Heart left ventricle (tissue), 16 donors: ENCODE measurements at regions of chr5 and their contacts with region 1.

Region 1: DNA sequence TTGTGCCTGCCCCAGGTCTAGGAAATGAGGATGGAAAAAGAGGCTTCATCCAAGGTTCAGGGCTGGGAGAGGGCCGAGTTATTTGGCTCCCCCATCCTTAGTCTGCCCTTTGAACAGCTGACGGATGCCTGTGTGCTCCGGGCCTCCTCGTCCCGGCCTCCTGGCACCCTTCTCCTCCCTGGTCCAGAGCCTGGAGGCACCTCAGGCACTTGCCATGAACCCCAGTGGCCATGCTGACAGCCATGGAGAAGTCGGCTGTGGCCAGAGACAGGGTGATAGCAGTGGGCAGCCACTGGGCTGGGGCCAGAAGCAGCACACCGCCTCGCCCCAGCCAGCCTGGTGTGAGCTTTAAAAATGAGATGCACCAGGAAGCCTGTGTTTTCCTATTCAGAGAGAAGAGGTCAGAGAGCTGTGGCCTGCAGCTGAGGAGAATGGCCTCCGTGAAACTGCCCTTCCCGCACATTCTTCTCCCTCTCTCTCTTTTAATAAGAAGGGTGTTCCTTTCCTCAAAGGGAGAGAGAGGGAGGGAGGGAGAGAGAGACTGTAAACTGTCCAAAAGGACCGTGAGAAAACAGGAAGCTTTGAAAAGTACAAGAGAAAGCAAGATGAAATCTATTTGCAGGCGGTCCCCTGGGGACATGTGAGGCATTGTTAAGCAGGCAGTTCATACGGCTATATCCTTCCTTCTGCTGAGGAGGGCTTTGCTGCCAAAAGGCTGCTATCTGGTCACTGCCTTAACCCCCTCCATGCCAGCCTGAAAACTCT is 55.3 kb downstream of the ZNF366 start:
- DNase-seq: peak; percentile 67 to 90 (median 87)
- ATAC-seq: peak; percentile 72 to 86 (median 84)
- H3K4me3 ChIP-seq: peak overlapping the region in 1 of 12 donors; percentile 1
- H3K27ac ChIP-seq: peak overlapping the region; percentile 82 to 99 (median 92)
- H3K4me1 ChIP-seq: peaks cover 16 to 71% (median 60%) of the 10 kb centered on the region in 12 donors
- H3K27me3 ChIP-seq: no peaks in the 10 kb centered on the region
- CTCF ChIP-seq: no peak
- POLR2A ChIP-seq: no peak

Region 2: GRCh38 chr5:72366324-72366976 is 85.5 kb before region 1 on chr5:
- intact Hi-C with region 1: loop called in 2 of 10 experiments (anchors 5 kb)
- DNase-seq: peak in 4 of 5 donors; percentile 68 to 78 (median 75)
- ATAC-seq: peak; percentile 78 to 92 (median 91)
- H3K4me3 ChIP-seq: no peak overlapping the region
- H3K27ac ChIP-seq: peak overlapping the region in 6 of 12 donors; percentile 15 to 43 (median 25)
- H3K4me1 ChIP-seq: peaks cover 0 to 44% (median 11%) of the 10 kb centered on the region in 12 donors
- H3K27me3 ChIP-seq: no peaks in the 10 kb centered on the region
- CTCF ChIP-seq: peak; percentile 65 to 89 (median 82)
- POLR2A ChIP-seq: no peak

Region 3: DNA sequence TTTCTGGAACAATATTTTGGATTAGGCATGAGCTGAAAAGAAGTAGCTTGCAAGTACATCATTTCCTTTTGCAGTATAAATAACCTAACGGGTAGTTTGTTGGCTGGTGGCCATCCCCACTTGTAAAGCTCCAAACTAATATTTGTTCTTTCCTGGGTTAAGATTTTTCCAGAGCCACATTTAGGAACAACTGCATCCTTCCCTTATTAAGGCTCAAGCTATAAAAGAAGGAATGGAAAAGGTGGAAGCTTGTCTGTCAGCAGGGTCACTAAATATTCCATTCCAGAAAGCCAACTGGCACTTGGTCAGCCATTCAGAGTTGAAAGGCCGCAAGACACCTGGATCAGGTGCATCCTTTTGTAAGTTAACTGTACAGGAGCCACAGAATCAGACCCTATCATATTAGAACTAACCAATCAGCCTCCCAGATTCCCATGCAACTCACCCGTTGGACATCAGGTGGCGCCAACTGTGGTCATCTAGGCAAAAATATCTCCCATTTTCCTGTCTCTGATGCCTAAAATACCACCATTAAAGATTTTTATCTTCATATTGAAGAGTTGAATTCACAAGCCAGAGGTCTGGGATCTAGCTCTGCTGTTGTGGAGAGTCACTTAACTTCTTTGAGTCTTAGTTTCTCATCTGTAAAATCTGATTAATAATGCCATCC is 48.8 kb before region 1 on chr5:
- intact Hi-C with region 1: loop called in 1 of 10 experiments (anchors 10 kb)
- DNase-seq: peak in 4 of 5 donors; percentile 46 to 66 (median 62)
- ATAC-seq: peak in 2 of 4 donors; percentile 21 to 57
- H3K4me3 ChIP-seq: no peak overlapping the region
- H3K27ac ChIP-seq: peak overlapping the region in 11 of 12 donors; percentile 4 to 67 (median 40)
- H3K4me1 ChIP-seq: peaks cover 0 to 33% (median 12%) of the 10 kb centered on the region in 12 donors
- H3K27me3 ChIP-seq: no peaks in the 10 kb centered on the region
- CTCF ChIP-seq: peak in 11 of 12 donors; percentile 12 to 53 (median 33)
- POLR2A ChIP-seq: no peak

Region 4: DNA sequence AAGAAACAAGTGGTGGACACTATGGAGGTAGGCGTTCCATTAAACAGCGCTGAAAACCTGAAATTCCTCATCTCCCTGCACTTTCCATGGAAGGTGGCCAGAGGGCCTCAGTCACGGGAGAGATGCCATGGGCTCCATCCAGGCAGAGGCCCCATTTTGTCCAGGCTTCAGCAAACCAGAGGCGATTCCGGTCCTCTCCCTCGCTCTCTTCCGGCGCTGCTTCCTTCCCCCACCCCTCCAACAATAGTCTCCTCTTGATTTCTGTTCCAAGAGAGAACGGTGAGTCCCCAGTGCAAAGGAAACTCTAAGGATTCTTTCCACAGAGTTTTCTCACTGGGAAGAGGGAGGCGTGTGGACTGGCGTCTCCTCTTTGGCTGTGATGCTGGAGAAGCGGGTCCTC is 47.8 kb after region 1 on chr5:
- intact Hi-C with region 1: loop called in 5 of 10 experiments (anchors 2 to 10 kb)
- DNase-seq: peak; percentile 41 to 72 (median 65)
- ATAC-seq: peak; percentile 65 to 85 (median 72)
- H3K4me3 ChIP-seq: peak overlapping the region in 2 of 12 donors; percentile 5 to 12
- H3K27ac ChIP-seq: peak overlapping the region; percentile 56 to 84 (median 68)
- H3K4me1 ChIP-seq: peaks cover 0 to 54% (median 12%) of the 10 kb centered on the region in 12 donors
- H3K27me3 ChIP-seq: no peaks in the 10 kb centered on the region
- CTCF ChIP-seq: no peak
- POLR2A ChIP-seq: no peak

Region 5: GRCh38 chr5:72518001-72518683 is 66.2 kb after region 1 on chr5:
- intact Hi-C with region 1: loop called in 3 of 10 experiments (anchors 2 to 5 kb)
- DNase-seq: peak; percentile 35 to 73 (median 54)
- ATAC-seq: peak; percentile 49 to 86 (median 84)
- H3K4me3 ChIP-seq: no peak overlapping the region
- H3K27ac ChIP-seq: peak overlapping the region; percentile 45 to 83 (median 67)
- H3K4me1 ChIP-seq: peaks cover 0 to 27% (median 11%) of the 10 kb centered on the region in 12 donors
- H3K27me3 ChIP-seq: no peaks in the 10 kb centered on the region
- CTCF ChIP-seq: no peak
- POLR2A ChIP-seq: no peak